ENCODE measurements at regions of chr2 and their contacts with region 1.

Region 1: GRCh38 chr2:25165992-25166875 is 2.1 kb downstream of the POMC start:
- DNase-seq: peak; percentile 45
- H3K4me3 ChIP-seq: no peak overlapping the region
- H3K27ac ChIP-seq: no peak overlapping the region
- H3K4me1 ChIP-seq: no peaks in the 10 kb centered on the region
- H3K27me3 ChIP-seq: peaks cover 45% of the 10 kb centered on the region
- CTCF ChIP-seq: peak; percentile 51

Region 2: GRCh38 chr2:24984912-24985311 is 181.3 kb before region 1 on chr2:
- CTCF ChIA-PET with region 1: no interaction called
- POLR2A ChIA-PET with region 1: interaction called, 14 read pairs
- intact Hi-C with region 1: no loop called
- DNase-seq: peak; percentile 32
- H3K4me3 ChIP-seq: no peak overlapping the region
- H3K27ac ChIP-seq: no peak overlapping the region
- H3K4me1 ChIP-seq: no peaks in the 10 kb centered on the region
- H3K27me3 ChIP-seq: no peaks in the 10 kb centered on the region
- CTCF ChIP-seq: no peak

Region 3: GRCh38 chr2:25145803-25146202 is 20.4 kb before region 1 on chr2:
- CTCF ChIA-PET with region 1: no interaction called
- POLR2A ChIA-PET with region 1: no interaction called
- intact Hi-C with region 1: no loop called
- DNase-seq: no peak
- H3K4me3 ChIP-seq: no peak overlapping the region
- H3K27ac ChIP-seq: no peak overlapping the region
- H3K4me1 ChIP-seq: no peaks in the 10 kb centered on the region
- H3K27me3 ChIP-seq: no peaks in the 10 kb centered on the region
- CTCF ChIP-seq: no peak

Measured in A673 (cell line).